Cardiac septum (tissue), 1 donor: ENCODE measurements at regions of chr3 and their contacts with region 1.

Region 1: DNA sequence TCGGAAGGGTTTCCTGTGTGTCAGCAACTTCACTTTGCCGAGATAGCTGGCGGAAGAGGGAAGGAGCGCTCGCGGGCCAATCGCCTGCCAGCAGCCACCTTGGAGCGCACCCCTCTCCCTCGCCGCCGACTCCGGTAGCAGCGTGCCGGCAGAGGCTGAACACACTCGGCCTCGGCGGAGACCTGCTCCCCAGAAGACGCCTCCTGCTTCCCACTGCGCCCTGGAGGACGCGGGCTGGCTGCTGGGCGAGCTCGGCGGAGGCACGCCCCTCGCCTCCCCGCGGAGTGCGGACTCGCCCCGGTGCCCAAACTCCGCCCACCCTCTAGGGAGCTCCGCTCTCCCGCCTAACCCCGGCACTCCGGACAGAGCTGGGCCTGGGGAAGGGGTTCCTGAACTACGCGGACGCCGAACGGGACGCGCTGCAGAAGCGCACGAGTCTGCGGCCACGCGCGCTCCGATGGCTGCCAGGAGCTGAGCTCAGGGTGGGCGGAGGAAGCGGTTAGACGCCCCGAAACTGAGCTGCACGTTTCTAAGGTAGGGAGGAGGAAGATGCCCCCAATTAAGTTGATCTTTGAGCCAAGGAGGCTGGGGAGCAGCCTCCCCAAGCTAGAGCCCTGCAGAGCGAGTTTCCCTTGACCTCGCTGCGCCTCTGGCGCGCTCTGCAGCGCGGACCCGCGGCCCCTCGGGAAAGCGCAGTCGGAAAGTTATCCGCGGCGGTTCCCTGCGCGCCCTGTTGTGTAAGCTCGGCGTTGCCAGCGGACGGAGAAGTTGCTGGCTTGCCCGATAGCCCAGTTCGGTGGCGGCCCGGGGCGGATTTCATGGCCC is at the start of gene P2RY1:
- DNase-seq: peak; percentile 83
- total RNA-seq, gene P2RY1: 4.8 TPM

Region 2: DNA sequence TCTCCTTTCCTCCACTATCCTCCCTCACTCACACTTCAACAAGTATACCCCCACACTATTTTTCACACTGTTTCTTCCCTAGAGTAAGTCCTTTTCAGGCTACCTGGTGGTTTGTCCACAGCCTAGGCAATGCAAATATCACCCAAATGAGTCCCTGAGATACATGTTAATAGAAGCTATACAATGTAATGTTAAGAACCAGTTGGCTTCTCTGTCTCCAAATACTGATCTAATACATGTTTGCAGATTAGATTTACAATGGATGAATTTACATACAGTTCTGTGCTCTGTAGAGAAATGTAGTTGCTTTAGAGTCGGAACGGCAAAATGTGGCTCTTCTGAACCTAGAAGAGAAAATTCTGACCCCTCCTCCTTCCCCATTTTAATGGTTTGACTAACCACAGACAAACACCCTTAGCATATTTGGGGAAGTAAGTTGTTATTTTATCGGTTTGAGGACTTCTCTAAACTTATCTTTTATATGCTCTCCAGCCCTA is 629.8 kb before region 1 on chr3:
- intact Hi-C with region 1: loop called (anchors 10 kb)
- DNase-seq: no peak

Region 3: GRCh38 chr3:152583963-152584362 is 251.0 kb before region 1 on chr3:
- intact Hi-C with region 1: loop called (anchors 10 kb)
- DNase-seq: no peak